Ascending aorta (tissue), 2 donors: ENCODE measurements at regions of chr17 and their contacts with region 1.

Region 1: GRCh38 chr17:32319548-32319905 is 22.4 kb downstream of the C17orf75 start:
- DNase-seq: peak in 1 of 2 donors; percentile 86
- H3K4me3 ChIP-seq: no peak overlapping the region
- H3K27ac ChIP-seq: no peak overlapping the region
- H3K4me1 ChIP-seq: no peaks in the 10 kb centered on the region
- H3K27me3 ChIP-seq: no peaks in the 10 kb centered on the region
- CTCF ChIP-seq: peak; percentile 89 to 97 (median 94)

Region 2: DNA sequence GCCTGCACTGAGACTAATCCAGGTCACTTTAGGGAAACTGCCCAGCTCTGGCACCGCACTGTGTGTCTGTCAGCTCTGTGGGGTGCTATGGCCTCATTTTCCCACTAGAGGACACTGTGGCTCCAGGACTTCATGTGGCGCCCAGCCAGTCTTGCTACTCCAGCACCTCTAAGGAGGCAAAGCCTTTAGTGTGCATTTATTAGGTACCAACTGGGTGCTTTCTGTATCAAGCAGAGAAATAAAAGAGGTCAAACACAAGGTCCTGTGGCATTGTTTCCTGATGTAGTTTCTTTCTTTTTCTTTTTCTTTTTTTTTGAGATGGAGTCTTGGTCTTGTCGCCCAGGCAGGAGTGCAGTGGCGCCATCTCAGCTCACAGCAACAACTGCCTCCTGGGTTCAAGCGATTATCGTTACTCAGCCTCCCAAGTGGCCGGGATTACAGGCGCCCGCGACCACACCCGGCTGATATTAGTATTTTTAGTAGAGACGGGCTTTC is 66.4 kb before region 1 on chr17:
- intact Hi-C with region 1: loop called (anchors 1 kb)
- DNase-seq: peak in 1 of 2 donors; percentile 88
- H3K4me3 ChIP-seq: no peak overlapping the region
- H3K27ac ChIP-seq: no peak overlapping the region
- H3K4me1 ChIP-seq: no peaks in the 10 kb centered on the region
- H3K27me3 ChIP-seq: no peaks in the 10 kb centered on the region
- CTCF ChIP-seq: peak; percentile 88 to 95 (median 95)